Activated CD4-positive, alpha-beta T cell treated with anti-CD3 and anti-CD28 coated beads, Interleukin-2, amount 10 ng/mL, durations not matched to agents 7 days and 5 days (primary cell): ENCODE measurements at regions of chr20 and their contacts with region 1.

Region 1: DNA sequence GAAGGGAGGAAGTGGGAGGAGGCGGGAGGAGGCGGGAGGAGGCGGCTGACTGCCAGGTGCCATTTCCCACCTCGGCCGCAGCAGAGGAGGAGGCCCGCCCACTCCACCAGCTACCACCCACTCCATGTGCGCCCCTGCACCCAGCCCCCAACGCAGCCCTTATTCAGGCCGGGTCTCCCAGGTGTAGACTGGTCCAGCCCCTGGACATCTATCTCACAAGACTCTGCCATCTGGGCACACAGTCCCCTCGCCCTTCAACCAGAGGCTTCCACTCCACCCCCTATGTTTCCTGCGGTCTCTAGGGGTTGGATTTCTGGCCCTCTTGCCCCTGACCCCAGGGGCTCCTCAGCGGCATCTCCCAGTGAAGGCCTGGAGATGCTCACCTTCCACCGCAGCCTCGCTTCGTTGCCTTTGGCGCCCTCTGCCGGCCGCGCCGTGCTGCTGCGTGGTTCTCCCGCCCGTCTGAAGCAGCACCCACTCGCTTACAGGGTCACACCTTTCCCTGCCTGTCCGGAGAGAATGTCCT is 32.6 kb upstream of the FAM83D start:
- DNase-seq: peak; percentile 74
- H3K4me3 Mint-ChIP-seq: peak overlapping the region; percentile 12
- H3K27ac Mint-ChIP-seq: peak overlapping the region; percentile 81
- H3K4me1 Mint-ChIP-seq: peaks cover 45% of the 10 kb centered on the region
- H3K27me3 Mint-ChIP-seq: no peaks in the 10 kb centered on the region

Region 2: DNA sequence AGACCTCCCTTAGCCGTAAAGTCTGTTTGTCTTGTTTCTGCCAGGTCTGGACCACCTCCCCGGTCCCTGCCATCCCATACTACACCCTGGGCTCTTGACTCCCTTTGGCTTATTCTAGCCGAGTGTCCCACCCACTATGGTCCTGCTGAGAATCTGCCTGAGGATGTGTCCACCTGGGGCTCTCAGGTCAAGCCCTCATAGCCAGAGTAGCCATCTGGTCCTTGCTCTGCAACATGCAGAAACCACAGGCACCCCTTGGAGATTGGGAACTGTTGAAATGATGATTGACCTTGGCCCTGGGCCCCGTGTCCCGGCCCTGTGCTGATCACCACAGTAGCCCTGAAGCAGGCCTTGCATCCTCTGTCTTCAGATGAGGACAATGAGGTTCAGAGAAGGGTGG is 946.7 kb before region 1 on chr20:
- CTCF ChIA-PET with region 1: no interaction called
- POLR2A ChIA-PET with region 1: no interaction called
- DNase-seq: no peak
- H3K4me3 Mint-ChIP-seq: no peak overlapping the region
- H3K27ac Mint-ChIP-seq: no peak overlapping the region
- H3K4me1 Mint-ChIP-seq: no peaks in the 10 kb centered on the region
- H3K27me3 Mint-ChIP-seq: no peaks in the 10 kb centered on the region

Region 3: DNA sequence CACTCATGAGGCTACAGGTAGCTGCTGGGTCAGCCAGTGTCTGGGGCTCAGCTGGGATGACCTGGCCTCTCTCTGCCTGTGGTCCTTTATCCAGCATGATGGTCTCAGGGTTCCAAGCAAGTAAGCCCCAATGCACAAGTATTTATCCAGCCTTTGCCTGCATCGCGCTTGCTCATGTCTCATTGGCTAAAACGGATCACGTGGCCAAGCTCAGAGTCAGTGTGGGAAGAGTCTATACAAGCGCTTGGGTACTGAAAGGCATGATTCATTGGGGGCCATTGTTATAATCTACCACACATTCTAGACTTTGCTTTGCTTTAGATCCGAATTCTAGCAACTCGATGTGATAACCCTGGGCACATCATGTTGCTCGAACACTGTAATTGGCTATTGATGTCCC is 39.9 kb before region 1 on chr20:
- CTCF ChIA-PET with region 1: no interaction called
- POLR2A ChIA-PET with region 1: no interaction called
- DNase-seq: no peak
- H3K4me3 Mint-ChIP-seq: no peak overlapping the region
- H3K27ac Mint-ChIP-seq: no peak overlapping the region
- H3K4me1 Mint-ChIP-seq: peaks cover 64% of the 10 kb centered on the region
- H3K27me3 Mint-ChIP-seq: no peaks in the 10 kb centered on the region

Region 4: GRCh38 chr20:38883081-38883980 is 10.3 kb before region 1 on chr20:
- CTCF ChIA-PET with region 1: interaction called, 36 read pairs
- POLR2A ChIA-PET with region 1: no interaction called
- DNase-seq: no peak
- H3K4me3 Mint-ChIP-seq: no peak overlapping the region
- H3K27ac Mint-ChIP-seq: peak overlapping the region; percentile 75
- H3K4me1 Mint-ChIP-seq: peaks cover 63% of the 10 kb centered on the region
- H3K27me3 Mint-ChIP-seq: no peaks in the 10 kb centered on the region

Region 5: GRCh38 chr20:38907918-38908677 is 14.5 kb after region 1 on chr20:
- CTCF ChIA-PET with region 1: interaction called, 17 read pairs
- POLR2A ChIA-PET with region 1: no interaction called
- DNase-seq: no peak
- H3K4me3 Mint-ChIP-seq: no peak overlapping the region
- H3K27ac Mint-ChIP-seq: no peak overlapping the region
- H3K4me1 Mint-ChIP-seq: peaks cover 4% of the 10 kb centered on the region
- H3K27me3 Mint-ChIP-seq: no peaks in the 10 kb centered on the region

Region 6: DNA sequence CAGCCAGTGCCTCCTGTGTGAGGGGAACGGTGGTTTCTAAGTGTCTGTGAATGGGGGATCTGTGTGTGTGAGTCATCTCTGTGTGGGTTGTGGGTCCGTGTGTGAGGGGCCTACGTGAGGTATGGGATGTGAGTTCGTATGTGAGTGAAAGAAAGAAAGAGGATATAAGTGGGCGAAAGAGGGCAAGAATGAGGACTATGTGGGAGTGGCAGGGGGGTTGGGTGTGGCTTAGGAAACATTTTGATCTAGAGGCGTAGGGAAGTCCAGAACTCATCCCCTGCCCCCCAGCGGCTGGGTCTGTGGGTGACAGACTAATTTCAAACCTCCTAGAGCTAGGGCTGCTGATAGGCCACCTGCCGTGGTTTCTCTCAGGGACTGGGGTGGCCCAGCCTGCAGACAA is 104.0 kb after region 1 on chr20:
- CTCF ChIA-PET with region 1: no interaction called
- POLR2A ChIA-PET with region 1: no interaction called
- DNase-seq: peak; percentile 26
- H3K4me3 Mint-ChIP-seq: no peak overlapping the region
- H3K27ac Mint-ChIP-seq: peak overlapping the region; percentile 1
- H3K4me1 Mint-ChIP-seq: peaks cover 17% of the 10 kb centered on the region
- H3K27me3 Mint-ChIP-seq: no peaks in the 10 kb centered on the region

Region 7: DNA sequence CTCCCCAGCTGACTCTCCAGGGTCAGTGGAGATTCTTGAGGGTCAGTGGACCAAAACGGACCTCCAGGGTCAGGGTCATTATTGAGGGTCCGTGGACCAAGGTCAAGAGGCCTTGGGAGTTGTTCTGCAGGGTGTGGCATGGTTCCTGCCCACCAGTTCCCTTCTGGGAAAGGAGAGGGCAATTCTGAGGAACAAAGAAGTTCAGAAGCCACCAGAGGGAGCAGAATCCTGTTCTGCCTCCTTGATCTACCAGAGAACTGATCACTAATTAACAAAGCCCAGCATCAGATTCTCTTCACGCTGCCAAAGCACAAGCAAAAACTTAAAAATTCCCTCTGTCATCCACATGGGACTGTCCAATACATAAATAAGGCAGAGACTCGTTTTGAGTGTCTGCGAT is 331.9 kb after region 1 on chr20:
- CTCF ChIA-PET with region 1: no interaction called
- POLR2A ChIA-PET with region 1: no interaction called
- DNase-seq: no peak
- H3K4me3 Mint-ChIP-seq: no peak overlapping the region
- H3K27ac Mint-ChIP-seq: no peak overlapping the region
- H3K4me1 Mint-ChIP-seq: no peaks in the 10 kb centered on the region
- H3K27me3 Mint-ChIP-seq: no peaks in the 10 kb centered on the region